ENCODE measurements at regions of chr6 and their contacts with region 1.

Region 1: GRCh38 chr6:17803409-17803808 is 96.7 kb upstream of the NUP153 start:
- DNase-seq: no peak
- H3K4me3 Mint-ChIP-seq: no peak overlapping the region
- H3K27ac Mint-ChIP-seq: no peak overlapping the region
- H3K4me1 Mint-ChIP-seq: no peaks in the 10 kb centered on the region
- H3K27me3 Mint-ChIP-seq: peaks cover 29% of the 10 kb centered on the region

Region 2: GRCh38 chr6:17584241-17584803 is 219.1 kb before region 1 on chr6:
- CTCF ChIA-PET with region 1: interaction called, 15 read pairs
- DNase-seq: peak; percentile 29
- H3K4me3 Mint-ChIP-seq: no peak overlapping the region
- H3K27ac Mint-ChIP-seq: no peak overlapping the region
- H3K4me1 Mint-ChIP-seq: peaks cover 9% of the 10 kb centered on the region
- H3K27me3 Mint-ChIP-seq: peaks cover 13% of the 10 kb centered on the region

Region 3: DNA sequence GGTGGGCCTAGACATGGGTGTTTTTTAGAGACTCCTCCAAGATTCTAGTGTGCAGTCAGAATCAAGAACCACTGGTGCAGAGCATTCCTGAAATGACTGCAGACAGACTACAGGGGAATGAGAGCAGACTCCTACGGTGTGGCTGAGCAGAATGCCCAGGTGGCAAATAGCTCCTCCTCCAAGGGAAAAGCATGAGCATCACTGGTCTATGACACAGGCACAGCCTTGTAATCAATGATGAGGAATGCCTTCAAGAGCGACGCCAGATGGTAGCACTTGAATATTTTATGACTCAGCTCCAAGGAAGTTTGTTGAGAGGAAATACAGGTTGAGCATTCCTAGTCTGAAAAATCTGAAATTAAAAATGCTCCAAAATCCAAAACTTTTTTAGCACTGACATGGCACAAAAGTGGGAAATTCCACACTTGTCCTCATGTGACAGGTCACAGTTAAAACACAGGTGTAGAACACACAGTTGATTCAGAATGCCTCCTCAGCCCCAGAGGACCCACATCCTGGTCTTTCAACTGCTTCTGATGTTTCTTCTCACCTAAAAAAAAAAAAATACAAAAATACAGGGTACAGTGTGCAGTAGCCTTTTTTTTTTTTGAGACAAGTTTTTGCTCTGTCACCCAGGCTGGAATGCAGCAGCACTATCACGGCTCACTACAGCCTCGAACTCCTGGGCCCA is 213.9 kb before region 1 on chr6:
- CTCF ChIA-PET with region 1: interaction called, 10 read pairs
- DNase-seq: peak; percentile 39
- H3K4me3 Mint-ChIP-seq: no peak overlapping the region
- H3K27ac Mint-ChIP-seq: peak overlapping the region; percentile 42
- H3K4me1 Mint-ChIP-seq: peaks cover 23% of the 10 kb centered on the region
- H3K27me3 Mint-ChIP-seq: peaks cover 6% of the 10 kb centered on the region

Region 4: DNA sequence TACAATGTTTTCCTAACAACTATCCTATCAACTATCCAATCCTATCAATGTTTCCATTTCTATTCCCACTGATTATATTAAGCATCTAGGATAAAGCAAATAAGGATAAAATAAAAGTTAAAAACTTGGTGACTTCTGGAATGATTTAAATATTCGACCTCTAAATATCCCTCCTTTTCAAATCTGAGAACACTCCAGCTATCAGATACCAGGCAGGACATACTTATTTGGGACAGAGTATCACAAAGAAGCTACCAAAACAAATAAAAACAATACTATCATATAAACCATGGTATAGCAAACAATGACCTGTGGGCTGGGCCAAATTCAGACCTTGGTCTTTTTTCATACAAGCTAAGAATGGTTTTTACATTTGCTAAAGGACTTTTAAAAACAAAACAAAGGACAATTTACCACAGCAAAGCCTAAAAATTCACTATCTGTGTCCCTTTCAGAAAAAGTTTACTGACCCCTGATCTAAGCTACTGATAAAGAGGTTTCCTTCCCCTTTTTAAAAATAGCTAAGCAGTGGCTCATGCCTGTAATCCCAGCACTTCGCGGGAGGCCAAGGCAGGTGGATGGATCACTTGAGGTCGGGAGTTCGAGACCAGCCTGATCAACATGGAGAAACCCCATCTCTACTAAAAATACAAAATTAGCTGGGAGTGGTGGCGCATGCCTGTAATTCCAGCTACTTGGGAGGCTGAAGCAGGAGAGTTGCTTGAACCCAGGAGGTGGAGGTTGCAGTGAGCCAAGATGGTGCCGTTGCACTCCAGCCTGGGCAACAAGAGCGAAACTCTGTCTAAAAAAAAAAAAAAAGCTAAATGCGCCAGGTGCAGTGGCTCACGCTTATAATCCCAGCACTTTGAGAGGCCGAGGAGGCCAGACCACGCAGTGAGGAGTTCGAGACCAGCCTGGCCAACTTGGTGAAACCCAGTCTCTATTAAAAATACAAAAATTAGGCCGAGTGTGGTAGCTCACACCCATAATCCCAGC is 102.7 kb before region 1 on chr6:
- CTCF ChIA-PET with region 1: interaction called, 20 read pairs
- DNase-seq: no peak
- H3K4me3 Mint-ChIP-seq: no peak overlapping the region
- H3K27ac Mint-ChIP-seq: peak overlapping the region; percentile 37
- H3K4me1 Mint-ChIP-seq: peaks cover 52% of the 10 kb centered on the region
- H3K27me3 Mint-ChIP-seq: no peaks in the 10 kb centered on the region

Region 5: GRCh38 chr6:17771609-17772008 is 31.8 kb before region 1 on chr6:
- CTCF ChIA-PET with region 1: no interaction called
- DNase-seq: no peak
- H3K4me3 Mint-ChIP-seq: no peak overlapping the region
- H3K27ac Mint-ChIP-seq: no peak overlapping the region
- H3K4me1 Mint-ChIP-seq: no peaks in the 10 kb centered on the region
- H3K27me3 Mint-ChIP-seq: peaks cover 2% of the 10 kb centered on the region